ENCODE measurements at regions of chr11 and their contacts with region 1.

Region 1: GRCh38 chr11:119381181-119381988 is at the start of gene USP2:
- DNase-seq: peak; percentile 99 to 100
- H3K4me3 ChIP-seq: peak within 1 kb of the TSS; percentile 46
- H3K4me3 Mint-ChIP-seq: no peak within 1 kb of the TSS
- H3K27ac Mint-ChIP-seq: no peak within 1 kb of the TSS
- H3K4me1 ChIP-seq: peaks cover 14% of the 10 kb centered on the region
- H3K4me1 Mint-ChIP-seq: peaks cover 14% of the 10 kb centered on the region
- H3K27me3 ChIP-seq: no peaks in the 10 kb centered on the region; the same call in 1 of the 2 replicates
- H3K27me3 Mint-ChIP-seq: peaks cover 3% of the 10 kb centered on the region
- CTCF ChIP-seq: peak; percentile 97 to 99
- total RNA-seq, gene USP2: 13.9 and 14.4 TPM in 2 replicates

Region 2: GRCh38 chr11:119236490-119236889 is 144.9 kb before region 1 on chr11:
- CTCF ChIA-PET with region 1: no interaction called
- POLR2A ChIA-PET with region 1: no interaction called
- intact Hi-C with region 1: loop called (anchors 1 kb)
- DNase-seq: no peak
- H3K4me3 ChIP-seq: no peak overlapping the region
- H3K4me3 Mint-ChIP-seq: no peak overlapping the region
- H3K27ac Mint-ChIP-seq: no peak overlapping the region
- H3K4me1 ChIP-seq: no peaks in the 10 kb centered on the region
- H3K4me1 Mint-ChIP-seq: no peaks in the 10 kb centered on the region
- H3K27me3 ChIP-seq: no peaks in the 10 kb centered on the region
- H3K27me3 Mint-ChIP-seq: no peaks in the 10 kb centered on the region
- CTCF ChIP-seq: no peak

Region 3: DNA sequence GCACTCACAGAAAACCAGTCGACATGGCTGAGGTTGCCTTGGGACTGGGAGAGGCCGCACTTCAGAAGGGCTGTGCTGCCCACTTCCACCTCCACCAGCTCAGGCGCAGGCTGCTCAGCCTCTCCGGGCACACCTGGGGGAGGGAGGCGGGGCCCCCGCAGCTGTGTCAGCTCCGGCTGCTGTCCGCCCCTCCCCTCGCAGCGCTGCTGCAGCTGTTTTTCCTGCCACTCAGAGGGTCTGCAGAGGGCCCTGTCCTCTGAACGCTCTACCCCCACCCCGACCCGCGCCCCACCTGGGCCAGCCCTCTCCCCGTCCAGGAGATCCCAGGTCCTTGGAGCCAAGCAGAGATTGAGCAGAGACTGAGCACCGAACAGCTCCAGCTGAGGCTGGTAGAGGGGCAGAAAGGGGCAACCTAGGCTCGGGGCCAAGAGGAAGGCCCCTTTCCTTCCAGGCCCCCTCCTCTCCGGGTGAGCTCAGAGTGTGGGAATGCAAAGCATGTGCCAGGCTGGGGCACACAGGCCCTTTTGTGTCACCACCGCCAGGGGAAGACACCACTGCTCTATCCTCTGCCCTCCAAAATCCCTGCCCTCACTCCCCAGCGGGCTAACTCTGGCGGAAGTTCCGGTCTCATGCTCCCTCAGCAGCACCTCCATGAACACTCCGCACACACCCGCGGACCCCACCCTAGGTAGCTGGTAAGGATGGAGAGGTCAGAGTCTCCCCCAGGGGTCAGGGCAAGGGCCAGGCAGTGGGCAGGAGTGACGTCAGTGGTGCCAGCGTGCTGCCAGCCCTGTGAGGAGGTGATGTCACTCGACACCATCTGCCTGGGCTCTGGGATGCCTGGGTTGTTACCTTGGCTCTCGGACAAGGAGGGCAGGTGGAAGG is 66.0 kb before region 1 on chr11:
- CTCF ChIA-PET with region 1: interaction called, 10 read pairs
- POLR2A ChIA-PET with region 1: no interaction called
- intact Hi-C with region 1: no loop called
- DNase-seq: peak; percentile 53 to 58
- H3K4me3 ChIP-seq: peak overlapping the region; percentile 8; the same call in 1 of the 2 replicates
- H3K4me3 Mint-ChIP-seq: peak overlapping the region; percentile 76
- H3K27ac Mint-ChIP-seq: no peak overlapping the region
- H3K4me1 ChIP-seq: peaks cover 23% of the 10 kb centered on the region
- H3K4me1 Mint-ChIP-seq: no peaks in the 10 kb centered on the region
- H3K27me3 ChIP-seq: peaks cover 7% of the 10 kb centered on the region
- H3K27me3 Mint-ChIP-seq: peaks cover 5% of the 10 kb centered on the region
- CTCF ChIP-seq: peak in 1 of 2 experiments; percentile 21

Region 4: DNA sequence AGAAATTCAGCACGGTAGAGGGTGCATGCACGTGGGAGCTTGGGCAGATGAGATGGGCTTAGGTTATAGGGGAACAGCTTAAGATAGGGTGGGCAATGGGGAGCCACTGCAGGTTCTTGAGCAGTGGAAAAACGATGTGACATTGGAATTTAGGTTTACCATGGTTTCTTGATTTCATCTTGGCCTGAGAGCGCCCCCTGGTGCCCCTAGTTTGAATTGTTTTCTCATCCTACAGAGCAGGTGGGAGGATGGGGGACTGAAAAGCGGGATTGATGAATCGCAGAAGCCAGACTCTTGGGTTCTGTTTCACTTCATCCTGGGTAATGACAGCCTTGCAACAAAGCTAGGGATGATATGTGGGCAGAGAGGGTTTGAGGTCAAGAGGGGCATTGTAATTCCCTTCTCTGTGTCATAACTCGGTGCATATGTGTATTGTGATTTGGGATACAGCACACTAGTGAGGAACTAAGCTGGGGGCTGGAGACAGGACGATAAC is 57.8 kb before region 1 on chr11:
- CTCF ChIA-PET with region 1: interaction called, 13 read pairs
- POLR2A ChIA-PET with region 1: no interaction called
- intact Hi-C with region 1: loop called (anchors 1 kb)
- DNase-seq: peak; percentile 82 to 89
- H3K4me3 ChIP-seq: no peak overlapping the region
- H3K4me3 Mint-ChIP-seq: no peak overlapping the region
- H3K27ac Mint-ChIP-seq: no peak overlapping the region
- H3K4me1 ChIP-seq: peaks cover 24% of the 10 kb centered on the region
- H3K4me1 Mint-ChIP-seq: no peaks in the 10 kb centered on the region
- H3K27me3 ChIP-seq: no peaks in the 10 kb centered on the region
- H3K27me3 Mint-ChIP-seq: no peaks in the 10 kb centered on the region
- CTCF ChIP-seq: peak; percentile 84 to 95

Region 5: DNA sequence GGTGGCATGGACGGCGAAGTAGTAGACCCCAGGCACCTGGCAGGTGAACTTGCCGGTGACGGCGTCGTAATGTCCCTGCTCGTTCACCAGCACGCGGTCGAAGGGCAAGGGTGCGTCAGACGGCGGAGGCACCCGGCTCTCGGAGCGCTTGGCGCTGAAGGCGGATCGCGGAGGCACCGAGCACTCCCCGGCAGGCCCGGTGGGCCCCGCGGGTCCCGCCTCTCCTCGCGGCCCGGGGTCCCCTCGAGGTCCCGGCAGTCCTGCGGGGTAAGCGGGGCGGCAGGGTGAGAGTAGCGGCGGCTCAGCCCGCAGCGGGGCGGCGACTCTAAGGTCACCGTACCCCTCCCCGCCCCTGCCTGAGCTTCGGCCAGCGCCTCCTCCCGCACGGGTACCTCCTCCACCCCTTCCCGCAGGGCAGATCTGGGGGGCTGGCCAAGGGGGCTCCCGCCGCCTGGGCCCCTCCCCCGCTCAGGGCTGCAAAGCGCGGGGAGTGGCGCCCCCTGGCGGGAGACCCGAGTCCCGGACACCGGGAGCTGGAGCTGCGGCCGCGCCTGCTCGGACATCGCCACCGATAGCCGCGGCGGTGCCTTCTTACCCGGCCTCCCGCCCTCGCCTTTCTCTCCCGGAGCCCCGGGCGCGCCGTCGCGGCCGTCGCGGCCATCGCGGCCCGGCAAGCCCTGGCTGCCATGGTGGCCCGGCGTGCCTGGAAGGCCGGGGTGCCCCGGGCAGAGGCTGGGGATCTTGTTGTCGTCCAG is 41.6 kb before region 1 on chr11:
- CTCF ChIA-PET with region 1: interaction called, 220 read pairs
- POLR2A ChIA-PET with region 1: interaction called, 13 read pairs
- intact Hi-C with region 1: no loop called
- DNase-seq: peak in 1 of 2 experiments; percentile 89
- H3K4me3 ChIP-seq: peak overlapping the region; percentile 45
- H3K4me3 Mint-ChIP-seq: peak overlapping the region; percentile 69
- H3K27ac Mint-ChIP-seq: no peak overlapping the region
- H3K4me1 ChIP-seq: peaks cover 37% of the 10 kb centered on the region
- H3K4me1 Mint-ChIP-seq: peaks cover 29% of the 10 kb centered on the region
- H3K27me3 ChIP-seq: no peaks in the 10 kb centered on the region; the same call in 1 of the 2 replicates
- H3K27me3 Mint-ChIP-seq: peaks cover 3% of the 10 kb centered on the region
- CTCF ChIP-seq: peak; percentile 93 to 99

Region 6: GRCh38 chr11:119363851-119364590 is 17.4 kb before region 1 on chr11:
- CTCF ChIA-PET with region 1: interaction called, 13 read pairs
- POLR2A ChIA-PET with region 1: interaction called, 4 read pairs
- intact Hi-C with region 1: loop called (anchors 1 kb)
- DNase-seq: peak in 1 of 2 experiments; percentile 92
- H3K4me3 ChIP-seq: peak overlapping the region; percentile 64
- H3K4me3 Mint-ChIP-seq: peak overlapping the region; percentile 77
- H3K27ac Mint-ChIP-seq: peak overlapping the region; percentile 67
- H3K4me1 ChIP-seq: peaks cover 75% of the 10 kb centered on the region
- H3K4me1 Mint-ChIP-seq: peaks cover 68% of the 10 kb centered on the region
- H3K27me3 ChIP-seq: no peaks in the 10 kb centered on the region
- H3K27me3 Mint-ChIP-seq: no peaks in the 10 kb centered on the region
- CTCF ChIP-seq: no peak

Region 7: DNA sequence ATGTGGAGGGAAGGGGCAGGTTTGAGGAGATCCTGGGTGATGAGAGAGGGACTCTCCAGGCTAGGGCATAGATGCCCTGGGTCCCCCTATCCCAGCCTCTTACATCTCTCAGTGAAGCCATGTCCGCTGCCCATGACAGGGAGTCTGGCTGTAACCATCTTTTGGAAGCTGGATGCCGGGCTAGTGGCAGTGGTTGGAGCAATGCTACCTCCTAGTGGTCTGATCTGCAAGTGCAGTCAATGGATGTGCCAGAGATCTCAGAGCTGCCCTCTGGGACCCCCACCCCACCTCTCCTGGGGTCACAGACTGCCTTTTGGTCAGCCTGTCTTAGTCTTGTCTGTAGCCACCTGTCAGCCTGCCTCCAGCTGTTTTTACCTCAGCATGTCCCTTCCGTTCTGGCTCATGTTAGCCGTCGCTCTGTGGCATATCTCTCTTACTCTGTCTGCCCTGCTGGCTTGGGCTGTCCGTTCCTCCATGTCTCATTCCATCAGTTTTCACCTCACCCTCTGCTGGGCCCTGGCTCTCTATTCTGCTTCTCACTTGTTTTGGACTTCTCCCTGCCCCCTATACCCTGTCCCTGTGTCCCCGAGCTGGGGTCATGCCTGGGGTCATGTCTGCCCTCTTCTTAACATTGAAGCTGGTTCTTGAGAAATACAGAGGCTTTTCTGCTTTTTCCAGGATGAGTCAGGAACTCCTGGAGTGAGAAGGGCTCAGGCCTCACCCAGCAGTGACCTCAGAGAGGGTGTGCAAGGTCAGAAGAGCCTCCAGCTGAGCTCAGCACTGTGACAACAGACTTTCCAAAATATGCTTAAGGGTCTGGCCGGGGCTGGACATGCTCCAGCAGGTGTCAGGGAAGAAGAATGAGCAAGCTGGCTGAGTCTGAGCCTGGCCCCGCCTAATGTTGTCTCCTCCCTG is 93.6 kb after region 1 on chr11:
- CTCF ChIA-PET with region 1: interaction called, 7 read pairs
- POLR2A ChIA-PET with region 1: no interaction called
- intact Hi-C with region 1: loop called (anchors 1 kb)
- DNase-seq: peak; percentile 65 to 79
- H3K4me3 ChIP-seq: no peak overlapping the region
- H3K4me3 Mint-ChIP-seq: no peak overlapping the region
- H3K27ac Mint-ChIP-seq: no peak overlapping the region
- H3K4me1 ChIP-seq: no peaks in the 10 kb centered on the region
- H3K4me1 Mint-ChIP-seq: no peaks in the 10 kb centered on the region
- H3K27me3 ChIP-seq: no peaks in the 10 kb centered on the region; the same call in 1 of the 2 replicates
- H3K27me3 Mint-ChIP-seq: peaks cover 11% of the 10 kb centered on the region
- CTCF ChIP-seq: peak; percentile 92 to 97

Region 8: GRCh38 chr11:119651802-119652584 is 270.6 kb after region 1 on chr11:
- CTCF ChIA-PET with region 1: no interaction called
- POLR2A ChIA-PET with region 1: no interaction called
- intact Hi-C with region 1: no loop called
- DNase-seq: no peak
- H3K4me3 ChIP-seq: no peak overlapping the region
- H3K4me3 Mint-ChIP-seq: no peak overlapping the region
- H3K27ac Mint-ChIP-seq: no peak overlapping the region
- H3K4me1 ChIP-seq: no peaks in the 10 kb centered on the region
- H3K4me1 Mint-ChIP-seq: no peaks in the 10 kb centered on the region
- H3K27me3 ChIP-seq: no peaks in the 10 kb centered on the region
- H3K27me3 Mint-ChIP-seq: peaks cover 8% of the 10 kb centered on the region
- CTCF ChIP-seq: no peak

Measured in Caco-2 (cell line).